ENCODE measurements at regions of chr11 and their contacts with region 1.

Region 1: GRCh38 chr11:76207642-76208401 is 1.5 kb upstream of the WNT11 start:
- DNase-seq: peak; percentile 59 to 88 (median 76)
- ATAC-seq: peak; percentile 78
- H3K4me3 ChIP-seq: peak overlapping the region; percentile 63 to 66
- H3K4me3 Mint-ChIP-seq: peak overlapping the region; percentile 82
- H3K27ac ChIP-seq: no peak overlapping the region
- H3K27ac Mint-ChIP-seq: no peak overlapping the region
- H3K4me1 ChIP-seq: peaks cover 39% of the 10 kb centered on the region
- H3K4me1 Mint-ChIP-seq: peaks cover 24% of the 10 kb centered on the region
- H3K27me3 ChIP-seq: peaks cover 13 to 42% of the 10 kb centered on the region in 2 experiments
- H3K27me3 Mint-ChIP-seq: peaks cover 33% of the 10 kb centered on the region
- CTCF ChIP-seq: peak; percentile 90

Region 2: DNA sequence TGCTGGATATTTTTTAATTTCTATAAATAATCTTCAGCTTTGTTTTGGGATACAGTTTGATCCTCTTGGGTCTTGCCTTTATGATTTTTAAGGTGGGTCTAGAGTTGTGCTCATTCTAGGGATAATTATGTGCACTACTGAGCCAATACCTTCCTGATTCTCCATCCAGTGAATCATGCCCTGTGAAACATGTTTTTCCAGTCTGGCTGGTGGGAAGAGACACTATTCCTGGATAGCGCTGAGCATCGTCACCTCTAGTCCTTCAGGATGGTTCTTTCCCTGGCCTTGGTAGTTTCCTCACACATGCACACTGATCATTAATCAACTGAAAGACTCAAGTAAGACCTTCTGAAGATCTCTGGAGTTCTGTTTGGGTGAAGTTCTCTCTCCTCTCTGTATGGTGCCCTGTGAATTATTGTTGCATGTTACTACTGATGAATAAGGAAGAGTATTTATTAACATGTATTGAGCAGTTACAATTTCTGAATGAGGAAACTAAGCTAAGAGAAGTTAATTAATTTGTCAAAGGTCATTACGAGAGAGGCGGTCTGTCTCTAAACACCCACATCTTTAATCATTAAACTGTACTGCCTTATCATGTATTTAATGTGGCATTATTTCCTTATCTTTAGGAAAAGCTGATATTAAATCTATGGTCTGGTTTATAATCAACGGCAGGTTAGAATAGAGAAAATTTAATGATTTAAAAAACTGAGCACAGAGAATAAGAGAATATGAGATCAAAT is 1675.1 kb before region 1 on chr11:
- CTCF ChIA-PET with region 1: no interaction called
- POLR2A ChIA-PET with region 1: no interaction called
- intact Hi-C with region 1: no loop called
- DNase-seq: no peak
- ATAC-seq: no peak
- H3K4me3 ChIP-seq: no peak overlapping the region
- H3K4me3 Mint-ChIP-seq: no peak overlapping the region
- H3K27ac ChIP-seq: no peak overlapping the region
- H3K27ac Mint-ChIP-seq: no peak overlapping the region
- H3K4me1 ChIP-seq: no peaks in the 10 kb centered on the region
- H3K4me1 Mint-ChIP-seq: no peaks in the 10 kb centered on the region
- H3K27me3 ChIP-seq: no peaks in the 10 kb centered on the region
- H3K27me3 Mint-ChIP-seq: no peaks in the 10 kb centered on the region
- CTCF ChIP-seq: no peak

Region 3: DNA sequence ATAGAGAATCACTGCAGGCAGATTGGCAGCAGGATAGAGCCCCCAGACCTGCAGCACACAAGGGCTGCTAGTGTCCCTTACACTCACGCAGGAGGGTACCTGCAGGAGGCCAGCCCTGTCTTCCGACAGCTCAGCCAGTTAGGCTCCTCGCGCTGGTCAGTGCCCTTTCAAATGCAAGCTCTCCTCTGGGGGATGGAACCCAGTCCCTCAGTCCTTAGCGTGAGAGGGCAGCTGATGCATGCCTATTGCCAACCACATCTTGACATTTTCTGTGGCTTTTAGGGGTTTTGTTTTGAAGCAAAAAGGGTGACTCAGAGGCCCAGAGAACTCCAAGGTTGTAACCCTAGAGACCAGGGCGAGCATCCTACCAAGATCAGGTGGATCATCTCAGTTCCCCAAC is 41.5 kb before region 1 on chr11:
- CTCF ChIA-PET with region 1: no interaction called
- POLR2A ChIA-PET with region 1: no interaction called
- intact Hi-C with region 1: no loop called
- DNase-seq: no peak
- ATAC-seq: no peak
- H3K4me3 ChIP-seq: no peak overlapping the region
- H3K4me3 Mint-ChIP-seq: no peak overlapping the region
- H3K27ac ChIP-seq: no peak overlapping the region
- H3K27ac Mint-ChIP-seq: no peak overlapping the region
- H3K4me1 ChIP-seq: no peaks in the 10 kb centered on the region
- H3K4me1 Mint-ChIP-seq: no peaks in the 10 kb centered on the region
- H3K27me3 ChIP-seq: no peaks in the 10 kb centered on the region
- H3K27me3 Mint-ChIP-seq: peaks cover 2% of the 10 kb centered on the region
- CTCF ChIP-seq: no peak

Region 4: GRCh38 chr11:76194872-76195668 is 12.8 kb before region 1 on chr11:
- CTCF ChIA-PET with region 1: interaction called, 35 read pairs
- POLR2A ChIA-PET with region 1: interaction called, 3 read pairs
- intact Hi-C with region 1: no loop called
- DNase-seq: no peak
- ATAC-seq: no peak
- H3K4me3 ChIP-seq: no peak overlapping the region
- H3K4me3 Mint-ChIP-seq: no peak overlapping the region
- H3K27ac ChIP-seq: no peak overlapping the region
- H3K27ac Mint-ChIP-seq: no peak overlapping the region
- H3K4me1 ChIP-seq: no peaks in the 10 kb centered on the region
- H3K4me1 Mint-ChIP-seq: no peaks in the 10 kb centered on the region
- H3K27me3 ChIP-seq: no peaks in the 10 kb centered on the region
- H3K27me3 Mint-ChIP-seq: no peaks in the 10 kb centered on the region
- CTCF ChIP-seq: no peak

Region 5: GRCh38 chr11:76248210-76248609 is 40.4 kb after region 1 on chr11:
- CTCF ChIA-PET with region 1: interaction called, 19 read pairs
- POLR2A ChIA-PET with region 1: no interaction called
- intact Hi-C with region 1: loop called in 1 of 2 experiments (anchors 5 kb)
- DNase-seq: peak in 2 of 9 experiments; percentile 20 to 27
- ATAC-seq: no peak
- H3K4me3 ChIP-seq: no peak overlapping the region
- H3K4me3 Mint-ChIP-seq: no peak overlapping the region
- H3K27ac ChIP-seq: no peak overlapping the region
- H3K27ac Mint-ChIP-seq: no peak overlapping the region
- H3K4me1 ChIP-seq: no peaks in the 10 kb centered on the region
- H3K4me1 Mint-ChIP-seq: no peaks in the 10 kb centered on the region
- H3K27me3 ChIP-seq: no peaks in the 10 kb centered on the region
- H3K27me3 Mint-ChIP-seq: no peaks in the 10 kb centered on the region
- CTCF ChIP-seq: no peak

Region 6: DNA sequence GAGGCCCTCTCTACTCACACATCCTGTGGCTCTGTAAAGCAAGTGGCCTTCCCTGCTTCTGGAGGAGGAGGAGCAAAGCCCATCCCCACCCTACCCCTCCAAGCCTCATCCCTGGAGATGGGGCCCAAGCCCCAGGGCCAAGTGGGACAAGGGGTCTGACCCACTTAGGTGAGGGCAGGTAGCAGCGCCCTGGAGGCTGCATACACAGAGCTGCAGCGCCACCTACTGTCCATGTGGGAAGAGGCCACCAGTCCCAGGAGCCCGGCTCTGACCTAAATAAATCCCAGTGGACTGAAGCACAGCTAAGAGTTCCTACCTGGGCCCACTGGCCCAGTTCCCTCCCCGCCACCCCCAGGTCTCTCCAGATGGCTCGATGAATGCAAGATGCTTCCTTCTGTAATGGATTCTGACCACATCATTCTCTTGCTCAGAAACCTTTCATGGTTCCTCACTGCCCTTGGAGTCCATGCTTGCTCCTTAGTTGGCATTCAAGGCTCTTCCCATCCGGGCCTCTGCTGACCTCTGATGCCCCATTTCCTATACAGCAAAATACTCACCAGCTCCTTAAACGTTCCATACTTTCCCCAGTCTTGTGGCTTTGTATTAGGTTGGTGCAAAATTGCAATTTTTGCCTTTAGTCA is 111.0 kb after region 1 on chr11:
- CTCF ChIA-PET with region 1: interaction called, 397 read pairs
- POLR2A ChIA-PET with region 1: interaction called, 23 read pairs
- intact Hi-C with region 1: loop called (anchors 1 kb)
- DNase-seq: peak; percentile 69 to 93 (median 87)
- ATAC-seq: peak; percentile 95
- H3K4me3 ChIP-seq: no peak overlapping the region
- H3K4me3 Mint-ChIP-seq: no peak overlapping the region
- H3K27ac ChIP-seq: no peak overlapping the region
- H3K27ac Mint-ChIP-seq: no peak overlapping the region
- H3K4me1 ChIP-seq: no peaks in the 10 kb centered on the region
- H3K4me1 Mint-ChIP-seq: no peaks in the 10 kb centered on the region
- H3K27me3 ChIP-seq: peaks cover 9 to 10% of the 10 kb centered on the region in 2 experiments
- H3K27me3 Mint-ChIP-seq: peaks cover 36% of the 10 kb centered on the region
- CTCF ChIP-seq: peak; percentile 77

Region 7: GRCh38 chr11:76444384-76445123 is 236.7 kb after region 1 on chr11 and contains the start of gene EMSY:
- CTCF ChIA-PET with region 1: no interaction called
- POLR2A ChIA-PET with region 1: no interaction called
- intact Hi-C with region 1: loop called (anchors 2 to 5 kb)
- DNase-seq: peak; percentile 77 to 97 (median 90)
- ATAC-seq: peak; percentile 91
- H3K4me3 ChIP-seq: peak within 1 kb of the TSS; percentile 58 to 100
- H3K4me3 Mint-ChIP-seq: peak within 1 kb of the TSS; percentile 94
- H3K27ac ChIP-seq: peak within 1 kb of the TSS; percentile 70 to 97
- H3K27ac Mint-ChIP-seq: peak within 1 kb of the TSS; percentile 96
- H3K4me1 ChIP-seq: peaks cover 20% of the 10 kb centered on the region
- H3K4me1 Mint-ChIP-seq: peaks cover 38% of the 10 kb centered on the region
- H3K27me3 ChIP-seq: no peaks in the 10 kb centered on the region
- H3K27me3 Mint-ChIP-seq: no peaks in the 10 kb centered on the region
- CTCF ChIP-seq: no peak
- total RNA-seq, gene EMSY: 19.8 to 20.7 TPM

Measured in CD8-positive, alpha-beta T cell (primary cell).